ENCODE measurements at regions of chr12 and their contacts with region 1.

Region 1: GRCh38 chr12:52327052-52327829 is 6.0 kb upstream of the KRT83 start:
- DNase-seq: peak; percentile 66 to 93
- H3K4me3 ChIP-seq: no peak overlapping the region
- H3K27ac ChIP-seq: peak overlapping the region; percentile 59 to 64
- H3K4me1 ChIP-seq: peaks cover 7% of the 10 kb centered on the region in 2 donors
- H3K27me3 ChIP-seq: no peaks in the 10 kb centered on the region
- CTCF ChIP-seq: peak; percentile 76 to 89 (median 89)

Region 2: DNA sequence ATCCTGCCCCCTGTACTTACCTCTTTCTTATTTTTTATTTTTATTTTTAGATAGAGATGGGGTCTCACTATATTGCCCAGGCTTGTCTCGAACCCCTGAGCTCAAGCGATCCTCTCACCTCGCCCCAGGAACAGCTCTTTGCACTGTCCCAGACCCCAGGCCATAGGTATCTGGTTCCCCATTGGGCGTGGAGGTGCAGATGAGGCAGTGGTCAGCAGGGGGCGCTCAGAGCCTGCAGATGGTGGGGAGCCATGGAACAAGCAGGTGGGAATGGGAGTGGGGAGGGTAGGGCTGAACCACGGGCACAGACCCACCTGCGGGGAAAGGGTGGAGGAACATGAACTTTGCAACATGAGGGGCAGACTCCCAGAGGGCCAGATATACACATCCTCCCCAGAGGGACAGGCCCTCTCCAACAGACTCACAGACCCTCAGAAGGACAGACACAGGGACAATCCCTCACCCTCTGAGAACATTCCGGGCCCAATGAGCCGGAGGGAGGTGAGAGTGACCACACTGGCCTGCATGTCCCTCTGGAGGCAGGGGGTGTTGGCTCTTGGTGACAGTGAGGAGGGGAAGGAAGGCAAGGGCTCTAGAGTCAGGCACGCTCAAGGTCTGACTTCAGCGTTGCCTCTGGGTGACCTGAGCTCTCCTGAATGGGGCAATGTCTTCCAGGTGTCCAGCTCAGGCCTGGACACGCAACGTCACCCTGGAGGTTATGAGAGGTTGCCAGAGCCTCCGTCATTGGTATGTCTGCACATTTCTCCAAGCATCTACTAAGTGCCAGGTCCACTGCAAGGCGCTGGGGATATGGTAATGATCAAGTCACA is 170.3 kb before region 1 on chr12:
- intact Hi-C with region 1: loop called (anchors 1 kb)
- DNase-seq: peak in 1 of 2 donors; percentile 88
- H3K4me3 ChIP-seq: no peak overlapping the region
- H3K27ac ChIP-seq: no peak overlapping the region
- H3K4me1 ChIP-seq: peaks cover 0 to 6% of the 10 kb centered on the region in 2 donors
- H3K27me3 ChIP-seq: no peaks in the 10 kb centered on the region
- CTCF ChIP-seq: peak; percentile 87 to 98 (median 95)

Region 3: DNA sequence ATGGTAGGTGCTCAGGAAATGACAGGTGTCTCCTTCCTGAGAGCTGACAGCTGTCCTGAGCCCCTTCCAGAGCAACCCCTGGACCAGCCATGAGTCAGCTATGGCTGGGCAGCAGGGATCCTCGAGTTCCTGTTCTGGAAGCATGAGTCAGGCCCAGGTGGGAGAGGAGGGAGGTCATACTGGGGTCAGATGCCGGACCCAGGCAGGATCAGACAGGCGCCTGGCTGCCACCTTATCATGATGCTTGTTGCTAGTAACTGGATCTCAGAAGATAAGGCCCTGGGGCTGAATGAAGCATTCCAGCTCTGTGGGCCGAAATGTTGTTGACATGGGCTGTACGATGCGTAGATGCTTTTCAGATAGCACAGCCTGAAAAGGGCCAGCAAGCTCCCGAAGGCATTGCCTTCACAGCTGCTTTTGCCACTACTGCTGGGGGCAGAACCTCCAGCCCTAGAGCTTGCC is 111.6 kb before region 1 on chr12:
- intact Hi-C with region 1: loop called (anchors 5 kb)
- DNase-seq: peak in 1 of 2 donors; percentile 24
- H3K4me3 ChIP-seq: no peak overlapping the region
- H3K27ac ChIP-seq: peak overlapping the region in 1 of 2 donors; percentile 25
- H3K4me1 ChIP-seq: peaks cover 6 to 32% of the 10 kb centered on the region in 2 donors
- H3K27me3 ChIP-seq: no peaks in the 10 kb centered on the region
- CTCF ChIP-seq: no peak

Region 4: GRCh38 chr12:52338241-52338960 is 11.2 kb after region 1 on chr12:
- intact Hi-C with region 1: no loop called
- DNase-seq: no peak
- H3K4me3 ChIP-seq: no peak overlapping the region
- H3K27ac ChIP-seq: no peak overlapping the region
- H3K4me1 ChIP-seq: no peaks in the 10 kb centered on the region
- H3K27me3 ChIP-seq: no peaks in the 10 kb centered on the region
- CTCF ChIP-seq: no peak

Measured in ascending aorta (tissue), 2 donors.